H1 (cell line): ENCODE measurements at regions of chr20 and their contacts with region 1.

Region 1: DNA sequence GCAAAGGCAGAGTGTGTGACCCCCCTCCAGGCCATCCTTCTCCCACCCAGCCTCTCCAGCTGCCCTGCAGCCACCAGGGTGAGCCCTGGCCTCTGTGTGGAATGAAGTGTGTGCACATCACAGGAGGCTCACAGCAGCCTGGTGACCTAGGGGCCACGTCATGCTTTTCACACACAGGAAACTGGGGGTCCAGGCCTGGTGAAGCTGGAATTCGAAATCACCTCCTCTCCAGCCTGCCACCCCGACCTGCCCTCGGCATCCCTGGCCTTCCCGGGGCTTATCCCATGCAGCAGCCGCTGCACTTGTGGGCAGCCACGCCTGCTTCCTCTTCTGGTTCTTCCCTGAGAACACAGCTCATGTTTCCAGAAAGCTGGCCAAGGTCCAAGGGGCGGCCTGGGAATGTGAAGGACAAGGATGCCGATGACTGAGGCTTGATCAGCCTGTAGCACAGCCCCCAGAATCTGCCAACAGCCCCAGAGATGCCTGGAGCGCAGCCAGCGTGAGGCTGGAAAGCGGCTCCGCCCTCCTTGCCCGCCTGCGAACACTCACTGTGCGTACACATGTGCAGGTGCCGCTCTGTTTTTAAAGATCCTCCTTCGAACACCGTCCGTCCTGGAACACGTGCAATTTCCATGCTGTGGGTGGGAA is 4.2 kb upstream of the NTSR1 start:
- DNase-seq: no peak
- H3K4me3 ChIP-seq: no peak overlapping the region
- H3K27ac ChIP-seq: no peak overlapping the region
- H3K4me1 ChIP-seq: peaks cover 0 to 8% (median 7%) of the 10 kb centered on the region in 4 experiments; a peak in 5 of 7 replicates
- H3K27me3 ChIP-seq: peaks cover 12 to 21% (median 16%) of the 10 kb centered on the region in 4 experiments
- CTCF ChIP-seq: no peak
- EP300 ChIP-seq: no peak
- POLR2A ChIP-seq: no peak
- RAD21 ChIP-seq: no peak

Region 2: GRCh38 chr20:62662422-62662821 is 42.0 kb before region 1 on chr20:
- CTCF ChIA-PET with region 1: interaction called, 12 read pairs
- POLR2A ChIA-PET with region 1: no interaction called
- DNase-seq: no peak
- H3K4me3 ChIP-seq: no peak overlapping the region
- H3K27ac ChIP-seq: no peak overlapping the region
- H3K4me1 ChIP-seq: no peaks in the 10 kb centered on the region
- H3K27me3 ChIP-seq: no peaks in the 10 kb centered on the region; a peak in 1 of 7 replicates
- CTCF ChIP-seq: no peak
- EP300 ChIP-seq: no peak
- POLR2A ChIP-seq: no peak
- RAD21 ChIP-seq: no peak

Region 3: DNA sequence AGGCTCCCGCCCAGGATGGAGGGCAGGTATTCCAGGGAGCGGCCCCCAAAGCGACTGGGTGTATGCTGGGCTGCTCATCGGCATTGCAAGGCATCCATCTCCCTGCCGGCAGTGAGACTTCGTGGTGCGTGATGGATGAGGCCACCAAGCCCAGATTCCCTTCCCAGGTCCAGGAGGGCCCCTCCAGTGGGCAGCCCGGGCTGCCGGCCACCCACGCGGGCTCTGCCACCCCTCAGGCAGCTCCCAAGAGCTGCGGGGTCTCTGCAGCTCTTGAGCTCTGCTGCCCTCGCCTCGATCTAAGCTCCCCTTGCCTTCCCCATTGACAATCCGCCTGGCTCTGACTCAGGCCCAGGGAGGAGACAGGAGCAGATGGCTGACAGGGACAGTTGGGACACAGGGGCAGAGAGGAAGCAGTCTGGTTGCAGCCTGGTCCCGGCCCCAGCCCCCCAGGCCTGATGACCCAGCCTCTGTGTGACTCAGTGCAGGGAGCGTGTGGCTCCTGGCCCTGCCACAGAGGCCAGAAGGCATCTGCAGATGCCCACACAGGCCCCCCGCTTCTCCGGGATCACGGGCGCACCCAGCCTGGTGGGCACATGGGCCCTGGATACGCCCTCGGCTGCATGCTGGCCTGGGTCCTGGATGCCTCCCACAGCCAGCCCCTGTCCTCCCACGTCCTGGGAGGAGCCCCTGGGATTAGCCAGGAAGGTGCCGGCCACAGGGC is 29.1 kb before region 1 on chr20:
- CTCF ChIA-PET with region 1: interaction called, 32 read pairs
- POLR2A ChIA-PET with region 1: no interaction called
- DNase-seq: no peak
- H3K4me3 ChIP-seq: no peak overlapping the region
- H3K27ac ChIP-seq: no peak overlapping the region
- H3K4me1 ChIP-seq: no peaks in the 10 kb centered on the region
- H3K27me3 ChIP-seq: no peaks in the 10 kb centered on the region; a peak in 1 of 7 replicates
- CTCF ChIP-seq: no peak
- EP300 ChIP-seq: no peak
- POLR2A ChIP-seq: no peak
- RAD21 ChIP-seq: no peak

Region 4: DNA sequence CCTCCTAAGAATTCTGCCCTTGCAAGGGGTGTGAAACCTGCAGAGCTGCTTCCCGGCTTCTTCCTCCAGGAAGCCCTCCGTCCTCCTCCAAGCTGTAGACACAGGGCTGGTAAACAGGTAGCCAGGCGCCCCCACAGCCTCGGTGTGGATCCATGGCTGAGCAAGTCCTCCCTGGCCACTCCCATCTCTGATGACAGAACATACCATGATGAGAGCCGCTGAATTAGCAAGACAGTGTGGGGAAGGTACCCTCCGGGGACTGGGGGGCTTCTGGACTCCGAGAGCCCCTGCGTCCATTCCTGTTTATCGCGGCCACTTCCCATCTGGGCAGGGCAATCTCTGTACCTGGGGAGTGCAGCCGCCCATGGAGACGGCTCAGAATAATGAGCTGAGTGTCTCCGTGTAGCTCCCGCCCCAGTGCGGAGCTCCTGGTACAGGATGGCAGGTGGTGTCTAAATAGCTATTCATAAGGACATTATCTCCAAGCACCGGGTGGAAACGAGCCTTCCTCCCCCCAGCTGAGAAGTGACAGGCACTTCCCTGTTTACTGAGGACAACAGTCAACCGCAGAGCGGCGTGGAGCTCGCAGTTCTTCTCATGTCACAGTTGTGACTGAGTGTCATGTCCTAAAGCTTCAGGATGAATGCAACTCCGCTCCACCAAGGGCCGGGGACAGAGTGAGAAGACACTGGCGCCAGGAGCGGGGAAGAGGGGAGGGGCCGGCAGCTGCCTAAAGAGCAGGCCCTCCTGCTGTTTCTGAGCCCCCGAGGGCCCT is 18.5 kb before region 1 on chr20:
- CTCF ChIA-PET with region 1: interaction called, 34 read pairs
- POLR2A ChIA-PET with region 1: interaction called, 7 read pairs
- DNase-seq: no peak
- H3K4me3 ChIP-seq: no peak overlapping the region
- H3K27ac ChIP-seq: no peak overlapping the region
- H3K4me1 ChIP-seq: peaks cover 0 to 3% (median 0%) of the 10 kb centered on the region in 4 experiments; a peak in 2 of 7 replicates
- H3K27me3 ChIP-seq: no peaks in the 10 kb centered on the region; a peak in 1 of 7 replicates
- CTCF ChIP-seq: no peak
- EP300 ChIP-seq: no peak
- POLR2A ChIP-seq: no peak
- RAD21 ChIP-seq: no peak

Region 5: GRCh38 chr20:62716198-62716940 is 11.9 kb after region 1 on chr20:
- CTCF ChIA-PET with region 1: interaction called, 18 read pairs
- POLR2A ChIA-PET with region 1: interaction called, 4 read pairs
- DNase-seq: no peak
- H3K4me3 ChIP-seq: no peak overlapping the region
- H3K27ac ChIP-seq: no peak overlapping the region
- H3K4me1 ChIP-seq: no peaks in the 10 kb centered on the region
- H3K27me3 ChIP-seq: peaks cover 0 to 2% (median 0%) of the 10 kb centered on the region in 4 experiments; a peak in 1 of 7 replicates
- CTCF ChIP-seq: no peak
- EP300 ChIP-seq: no peak
- POLR2A ChIP-seq: no peak
- RAD21 ChIP-seq: no peak

Region 6: DNA sequence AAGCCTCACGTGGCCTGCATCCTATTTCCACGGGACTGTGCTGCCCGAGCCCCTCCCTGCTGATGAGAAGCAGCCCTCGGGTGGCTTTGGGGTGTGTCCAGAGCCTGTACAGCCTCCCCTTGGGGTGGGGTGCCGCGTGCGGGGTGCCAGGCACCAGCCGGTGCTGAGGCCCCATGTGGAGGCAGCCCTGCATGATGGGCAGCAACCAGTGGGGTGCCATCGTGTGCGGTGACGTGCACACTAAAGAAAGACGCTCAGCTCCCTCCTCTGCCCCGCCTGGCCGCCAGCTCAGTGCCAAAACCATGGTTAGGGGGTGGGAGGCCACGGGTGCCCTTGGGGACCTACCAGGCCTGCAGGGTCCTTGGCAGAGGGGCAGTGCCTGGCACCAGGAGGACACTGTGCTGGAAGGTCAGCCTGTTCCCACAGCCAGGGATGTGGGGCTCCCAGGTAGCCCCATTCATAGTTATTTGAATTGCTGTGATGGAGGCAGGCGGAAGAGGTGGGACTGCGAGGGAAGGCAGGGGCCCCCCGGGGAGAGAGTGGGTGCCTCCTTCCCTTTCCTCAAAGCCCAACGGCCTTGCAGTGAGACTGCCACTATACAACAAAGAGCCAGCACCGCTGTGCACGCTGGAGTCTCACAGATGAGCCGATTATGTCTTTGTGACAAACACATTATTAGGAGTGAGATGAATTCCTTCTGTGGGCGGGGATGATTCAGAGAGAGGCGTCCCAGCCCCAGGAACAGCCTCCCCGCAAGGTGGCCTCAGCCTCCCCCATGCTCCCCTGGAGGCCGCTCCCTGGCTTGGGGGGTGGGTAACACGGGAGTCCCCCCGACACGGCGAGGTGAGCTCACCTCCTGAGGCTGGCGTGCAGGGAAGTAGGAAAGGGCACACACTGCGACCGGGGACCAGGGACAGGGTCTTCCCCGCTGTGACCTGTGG is 30.7 kb after region 1 on chr20:
- CTCF ChIA-PET with region 1: interaction called, 10 read pairs
- POLR2A ChIA-PET with region 1: no interaction called
- DNase-seq: no peak
- H3K4me3 ChIP-seq: no peak overlapping the region
- H3K27ac ChIP-seq: no peak overlapping the region
- H3K4me1 ChIP-seq: peaks cover 0 to 2% (median 0%) of the 10 kb centered on the region in 4 experiments; a peak in 1 of 7 replicates
- H3K27me3 ChIP-seq: 0 out of 7 replicates have a peak, but pooled peaks cover 0 to 3% (median 0%) of the 10 kb centered on the region in 4 experiments
- CTCF ChIP-seq: no peak
- EP300 ChIP-seq: no peak
- POLR2A ChIP-seq: no peak
- RAD21 ChIP-seq: no peak

Region 7: DNA sequence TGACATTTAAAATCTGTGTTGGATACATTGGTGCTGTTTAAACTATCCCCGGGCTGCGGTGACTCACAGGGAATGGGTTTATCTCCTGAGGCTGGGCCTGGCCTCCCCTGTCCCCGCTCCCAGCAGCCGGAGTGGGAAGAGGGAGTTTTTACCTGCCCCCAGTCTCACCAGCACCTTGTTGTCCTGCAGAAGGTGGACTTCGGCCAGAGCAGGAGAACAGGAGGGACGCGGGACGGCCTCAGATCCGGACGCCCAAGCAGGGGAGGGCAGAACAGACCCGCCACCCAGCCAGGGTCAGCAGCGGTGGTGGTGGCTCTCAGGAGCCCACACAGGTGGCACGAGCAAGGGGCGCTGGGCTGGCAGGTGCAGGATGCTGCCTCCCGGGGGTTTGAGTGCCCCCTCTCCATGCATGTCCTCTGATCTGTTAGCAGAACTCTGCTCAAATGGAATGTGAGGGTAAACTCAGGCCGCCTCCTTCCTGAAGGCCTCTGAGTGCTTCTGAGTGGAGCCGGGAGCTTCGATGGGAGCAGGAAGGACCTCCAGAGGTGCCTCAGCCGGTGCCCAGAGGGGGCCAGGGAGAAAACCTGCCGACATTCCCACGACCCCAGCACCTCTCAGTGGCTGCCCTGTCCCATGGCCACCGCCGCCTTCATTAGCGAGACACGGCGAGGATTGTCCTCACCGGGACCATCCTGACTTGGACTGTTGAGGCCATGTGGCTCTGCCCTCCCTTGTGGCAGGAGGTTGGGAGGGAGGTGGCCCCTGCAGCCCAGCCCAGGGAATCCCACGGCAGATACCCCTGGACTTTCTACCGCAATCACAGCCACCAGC is 48.5 kb after region 1 on chr20:
- CTCF ChIA-PET with region 1: interaction called, 10 read pairs
- POLR2A ChIA-PET with region 1: no interaction called
- DNase-seq: no peak
- H3K4me3 ChIP-seq: no peak overlapping the region
- H3K27ac ChIP-seq: no peak overlapping the region
- H3K4me1 ChIP-seq: peaks cover 0 to 10% (median 6%) of the 10 kb centered on the region in 4 experiments; a peak in 5 of 7 replicates
- H3K27me3 ChIP-seq: no peaks in the 10 kb centered on the region; a peak in 2 of 7 replicates
- CTCF ChIP-seq: no peak
- EP300 ChIP-seq: no peak
- POLR2A ChIP-seq: no peak
- RAD21 ChIP-seq: no peak